Heart left ventricle (tissue), 16 donors: ENCODE measurements at regions of chr13 and their contacts with region 1.

Region 1: DNA sequence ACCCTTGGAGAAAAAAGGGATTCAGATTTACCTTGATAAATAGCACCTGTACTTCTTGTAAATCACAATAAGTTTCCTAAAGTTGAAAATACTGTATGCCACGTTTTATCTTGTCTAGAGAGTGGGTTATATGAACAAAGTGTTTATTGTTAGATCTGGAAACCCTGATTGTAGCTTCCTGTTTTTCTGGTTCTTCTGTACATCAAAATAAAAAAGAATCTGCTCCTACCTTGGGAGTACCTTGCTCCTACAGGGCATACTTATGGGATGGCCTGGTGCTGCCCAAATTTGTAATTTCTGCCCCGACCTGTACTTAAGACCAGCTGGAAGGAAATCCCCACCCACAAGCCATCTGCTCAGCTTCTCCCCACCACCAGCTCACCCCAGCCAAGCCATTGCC is 241.1 kb downstream of the SLC7A1 start:
- DNase-seq: no peak
- ATAC-seq: no peak
- H3K4me3 ChIP-seq: no peak overlapping the region
- H3K27ac ChIP-seq: no peak overlapping the region
- H3K4me1 ChIP-seq: peaks cover 0 to 7% (median 0%) of the 10 kb centered on the region in 12 donors
- H3K27me3 ChIP-seq: no peaks in the 10 kb centered on the region
- CTCF ChIP-seq: no peak
- POLR2A ChIP-seq: no peak

Region 2: GRCh38 chr13:29210676-29211075 is 143.7 kb before region 1 on chr13:
- intact Hi-C with region 1: loop called in 3 of 10 experiments (anchors 5 kb)
- DNase-seq: no peak
- ATAC-seq: no peak
- H3K4me3 ChIP-seq: no peak overlapping the region
- H3K27ac ChIP-seq: no peak overlapping the region
- H3K4me1 ChIP-seq: no peaks in the 10 kb centered on the region
- H3K27me3 ChIP-seq: no peaks in the 10 kb centered on the region
- CTCF ChIP-seq: no peak
- POLR2A ChIP-seq: no peak

Region 3: GRCh38 chr13:29411481-29411880 is 57.1 kb after region 1 on chr13:
- intact Hi-C with region 1: no loop called
- DNase-seq: no peak
- ATAC-seq: no peak
- H3K4me3 ChIP-seq: no peak overlapping the region
- H3K27ac ChIP-seq: no peak overlapping the region
- H3K4me1 ChIP-seq: no peaks in the 10 kb centered on the region
- H3K27me3 ChIP-seq: no peaks in the 10 kb centered on the region
- CTCF ChIP-seq: no peak
- POLR2A ChIP-seq: no peak